RWPE1 (cell line): ENCODE measurements at regions of chr18 and their contacts with region 1.

Region 1: GRCh38 chr18:9898792-9899549 is 13.2 kb downstream of the TXNDC2 start:
- DNase-seq: no peak
- H3K27ac ChIP-seq: no peak overlapping the region
- CTCF ChIP-seq: no peak

Region 2: GRCh38 chr18:9705158-9705864 is 193.7 kb before region 1 on chr18:
- CTCF ChIA-PET with region 1: no interaction called
- POLR2A ChIA-PET with region 1: interaction called, 10 read pairs
- DNase-seq: no peak
- H3K27ac ChIP-seq: no peak overlapping the region
- CTCF ChIP-seq: no peak